ENCODE measurements at regions of chr10 and their contacts with region 1.

Region 1: DNA sequence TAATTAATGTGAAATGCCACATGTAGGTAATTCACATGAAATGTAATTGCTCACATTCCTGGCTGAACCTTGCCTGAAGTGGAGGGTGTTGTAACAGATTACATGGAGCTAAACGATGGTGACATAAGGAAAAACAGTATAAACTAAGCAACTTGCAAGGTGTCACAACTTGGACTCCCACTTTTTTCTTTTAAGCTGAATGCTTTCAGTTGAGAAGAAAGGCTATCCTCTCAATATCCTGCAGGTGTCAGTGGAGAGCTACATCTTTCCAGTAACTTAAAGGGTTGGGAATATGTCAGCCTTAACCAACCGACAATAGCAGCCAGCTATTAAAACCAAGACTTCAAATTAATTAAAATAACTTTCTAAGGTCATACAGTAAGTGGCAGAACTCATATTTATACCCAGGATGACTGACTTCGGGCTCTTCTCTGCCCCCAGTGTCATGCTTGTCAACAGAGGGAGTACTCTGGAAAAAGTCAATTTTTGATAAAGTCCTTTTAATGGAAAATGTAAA is 33.7 kb downstream of the NRBF2 start:
- DNase-seq: no peak
- H3K4me3 ChIP-seq: no peak overlapping the region
- H3K27ac ChIP-seq: peak overlapping the region in 2 of 4 donors; percentile 39 to 60
- H3K4me1 ChIP-seq: peaks cover 0 to 41% (median 27%) of the 10 kb centered on the region in 4 donors
- H3K27me3 ChIP-seq: no peaks in the 10 kb centered on the region
- CTCF ChIP-seq: peak; percentile 71 to 89 (median 78)
- EP300 ChIP-seq: no peak
- POLR2A ChIP-seq: no peak

Region 2: GRCh38 chr10:63137306-63137705 is 29.5 kb before region 1 on chr10:
- intact Hi-C with region 1: no loop called
- DNase-seq: no peak
- H3K4me3 ChIP-seq: no peak overlapping the region
- H3K27ac ChIP-seq: no peak overlapping the region
- H3K4me1 ChIP-seq: peaks cover 0 to 33% (median 27%) of the 10 kb centered on the region in 4 donors
- H3K27me3 ChIP-seq: no peaks in the 10 kb centered on the region
- CTCF ChIP-seq: no peak
- EP300 ChIP-seq: no peak
- POLR2A ChIP-seq: no peak

Region 3: DNA sequence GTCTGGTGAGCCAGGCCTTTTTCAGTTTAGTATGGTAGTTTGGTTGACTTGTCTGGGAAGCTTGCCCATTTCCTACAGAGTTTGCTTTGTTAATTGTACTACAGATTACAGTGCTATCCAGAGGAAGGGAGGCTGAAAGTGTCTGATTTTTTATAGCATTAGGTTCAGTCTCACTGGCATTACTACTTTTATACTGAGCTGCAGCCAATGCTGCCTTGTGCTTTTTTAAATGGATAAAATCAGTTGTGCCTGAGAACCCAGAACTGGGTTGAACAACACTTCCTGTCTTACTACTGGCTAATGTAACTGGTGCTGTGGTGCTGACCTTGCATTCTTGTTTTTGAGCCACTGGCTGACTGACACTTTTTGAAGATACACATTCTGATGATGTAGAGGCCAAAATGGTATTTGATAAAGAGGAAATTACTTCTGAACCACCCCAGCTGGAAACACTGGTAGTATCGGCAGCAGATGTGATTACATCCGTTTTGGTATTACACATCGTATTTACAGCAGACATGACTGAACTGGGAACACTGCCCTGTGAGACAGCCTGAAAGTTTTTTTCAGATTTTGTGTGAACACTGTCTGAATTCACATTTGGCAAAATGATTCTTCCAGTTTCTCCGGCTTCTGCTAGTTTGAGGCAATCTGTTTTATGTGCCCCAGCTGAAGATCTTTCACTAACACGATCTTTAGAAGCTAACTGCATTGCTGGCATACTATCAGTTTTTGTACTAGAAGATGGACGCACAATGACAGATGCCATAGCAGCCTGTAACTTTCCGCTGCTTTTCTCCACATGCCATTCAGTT is 40.4 kb after region 1 on chr10:
- intact Hi-C with region 1: loop called (anchors 5 kb)
- DNase-seq: no peak
- H3K4me3 ChIP-seq: peak overlapping the region in 3 of 4 donors; percentile 5 to 11 (median 8)
- H3K27ac ChIP-seq: peak overlapping the region; percentile 53 to 79 (median 72)
- H3K4me1 ChIP-seq: peaks cover 0 to 64% (median 49%) of the 10 kb centered on the region in 4 donors
- H3K27me3 ChIP-seq: no peaks in the 10 kb centered on the region
- CTCF ChIP-seq: no peak
- EP300 ChIP-seq: no peak
- POLR2A ChIP-seq: no peak

Region 4: DNA sequence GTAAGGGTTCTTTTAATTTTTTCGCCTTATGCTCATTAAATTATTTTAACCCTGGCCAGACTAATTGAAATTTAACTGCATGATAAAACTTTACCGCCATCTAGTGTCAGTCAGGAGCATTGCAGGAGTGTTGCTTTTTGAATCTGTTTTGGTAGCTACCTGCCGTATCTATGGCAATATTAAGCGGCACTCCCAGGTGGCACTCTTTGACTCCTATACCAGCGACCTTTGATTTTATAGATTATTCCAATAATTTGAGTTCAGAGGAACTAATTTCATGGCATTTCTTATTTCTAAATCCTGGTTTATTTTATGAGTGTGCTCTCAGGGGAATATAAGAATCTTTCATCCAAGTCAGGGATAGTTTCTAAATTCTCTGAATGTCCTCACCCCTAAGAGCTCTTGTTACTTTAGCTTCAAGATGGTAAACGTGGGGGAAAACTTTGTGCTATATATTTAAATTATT is 553.3 kb after region 1 on chr10:
- intact Hi-C with region 1: loop called (anchors 2 kb)
- DNase-seq: no peak
- H3K4me3 ChIP-seq: no peak overlapping the region
- H3K27ac ChIP-seq: peak overlapping the region; percentile 33 to 78 (median 60)
- H3K4me1 ChIP-seq: peaks cover 0 to 24% (median 16%) of the 10 kb centered on the region in 4 donors
- H3K27me3 ChIP-seq: no peaks in the 10 kb centered on the region
- CTCF ChIP-seq: peak; percentile 84 to 98 (median 94)
- EP300 ChIP-seq: no peak
- POLR2A ChIP-seq: no peak

Region 5: DNA sequence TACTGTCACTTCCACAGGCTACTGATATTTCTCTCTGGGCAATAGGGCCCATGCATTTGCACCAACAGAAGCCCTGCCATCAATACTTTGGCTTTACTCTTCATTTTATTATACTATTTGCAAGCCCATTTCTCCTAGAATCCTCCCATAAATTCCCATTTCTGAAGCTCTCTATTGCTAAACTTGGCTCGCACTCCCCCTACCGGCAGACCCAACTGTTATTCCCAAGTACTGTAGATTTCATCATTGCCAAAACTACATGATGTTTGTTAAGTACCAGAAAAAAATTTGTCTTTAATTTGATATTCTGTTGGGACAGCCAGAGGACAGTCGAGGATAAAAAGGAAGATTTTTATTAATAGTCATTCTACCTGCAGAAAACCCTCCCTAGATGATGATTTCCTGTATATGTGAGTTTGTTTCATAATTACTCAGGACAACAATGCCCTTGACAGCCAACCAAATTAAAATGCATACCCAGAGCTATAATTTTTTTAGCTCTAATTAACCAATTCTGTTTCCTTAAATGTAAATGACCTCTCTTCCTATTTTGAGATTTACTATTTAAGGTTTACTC is 653.0 kb after region 1 on chr10:
- intact Hi-C with region 1: loop called (anchors 5 kb)
- DNase-seq: peak; percentile 78
- H3K4me3 ChIP-seq: no peak overlapping the region
- H3K27ac ChIP-seq: no peak overlapping the region
- H3K4me1 ChIP-seq: no peaks in the 10 kb centered on the region
- H3K27me3 ChIP-seq: no peaks in the 10 kb centered on the region
- CTCF ChIP-seq: peak; percentile 32 to 74 (median 56)
- EP300 ChIP-seq: no peak
- POLR2A ChIP-seq: no peak

Measured in sigmoid colon (tissue), 7 donors.